Caco-2 (cell line): ENCODE measurements at regions of chr20 and their contacts with region 1.

Region 1: DNA sequence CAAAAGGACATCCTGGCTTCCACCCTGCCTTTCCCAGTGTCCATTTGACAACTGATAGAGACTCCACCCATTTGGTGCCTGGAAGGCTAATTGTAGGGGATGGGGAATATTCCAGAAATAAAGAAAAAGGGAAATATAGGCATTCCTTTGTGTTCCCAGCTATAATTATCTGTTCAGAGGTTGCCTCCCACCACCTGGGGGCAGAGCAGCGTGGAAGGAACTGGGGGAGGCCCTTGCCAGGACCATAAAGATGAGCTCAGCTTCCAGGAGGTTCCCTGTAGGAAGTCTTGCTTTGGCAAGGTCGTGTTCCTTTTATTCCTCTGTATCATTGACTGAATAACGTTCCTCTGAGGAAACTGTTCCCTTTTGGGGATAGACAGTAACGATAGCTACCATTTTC is 214.7 kb downstream of the TFAP2C start:
- DNase-seq: peak in 1 of 2 experiments; percentile 59
- H3K4me3 ChIP-seq: no peak overlapping the region
- H3K4me3 Mint-ChIP-seq: no peak overlapping the region
- H3K27ac Mint-ChIP-seq: no peak overlapping the region
- H3K4me1 ChIP-seq: no peaks in the 10 kb centered on the region
- H3K4me1 Mint-ChIP-seq: no peaks in the 10 kb centered on the region
- H3K27me3 ChIP-seq: no peaks in the 10 kb centered on the region; the same call in 1 of the 2 replicates
- H3K27me3 Mint-ChIP-seq: peaks cover 8% of the 10 kb centered on the region
- CTCF ChIP-seq: peak; percentile 39 to 61

Region 2: GRCh38 chr20:56859801-56860261 is 16.0 kb after region 1 on chr20:
- CTCF ChIA-PET with region 1: interaction called, 19 read pairs
- POLR2A ChIA-PET with region 1: no interaction called
- intact Hi-C with region 1: no loop called
- DNase-seq: peak in 1 of 2 experiments; percentile 70
- H3K4me3 ChIP-seq: no peak overlapping the region
- H3K4me3 Mint-ChIP-seq: no peak overlapping the region
- H3K27ac Mint-ChIP-seq: no peak overlapping the region
- H3K4me1 ChIP-seq: 0 out of 2 replicates have a peak, but pooled peaks cover 8% of the 10 kb centered on the region
- H3K4me1 Mint-ChIP-seq: no peaks in the 10 kb centered on the region
- H3K27me3 ChIP-seq: peaks cover 4% of the 10 kb centered on the region
- H3K27me3 Mint-ChIP-seq: peaks cover 21% of the 10 kb centered on the region
- CTCF ChIP-seq: no peak

Region 3: GRCh38 chr20:56945059-56945458 is 101.2 kb after region 1 on chr20:
- CTCF ChIA-PET with region 1: interaction called, 18 read pairs
- POLR2A ChIA-PET with region 1: no interaction called
- intact Hi-C with region 1: no loop called
- DNase-seq: no peak
- H3K4me3 ChIP-seq: no peak overlapping the region
- H3K4me3 Mint-ChIP-seq: no peak overlapping the region
- H3K27ac Mint-ChIP-seq: no peak overlapping the region
- H3K4me1 ChIP-seq: peaks cover 6% of the 10 kb centered on the region; the same call in 1 of the 2 replicates
- H3K4me1 Mint-ChIP-seq: peaks cover 9% of the 10 kb centered on the region
- H3K27me3 ChIP-seq: no peaks in the 10 kb centered on the region; the same call in none of the 2 replicates
- H3K27me3 Mint-ChIP-seq: peaks cover 8% of the 10 kb centered on the region
- CTCF ChIP-seq: peak; percentile 10 to 41

Region 4: DNA sequence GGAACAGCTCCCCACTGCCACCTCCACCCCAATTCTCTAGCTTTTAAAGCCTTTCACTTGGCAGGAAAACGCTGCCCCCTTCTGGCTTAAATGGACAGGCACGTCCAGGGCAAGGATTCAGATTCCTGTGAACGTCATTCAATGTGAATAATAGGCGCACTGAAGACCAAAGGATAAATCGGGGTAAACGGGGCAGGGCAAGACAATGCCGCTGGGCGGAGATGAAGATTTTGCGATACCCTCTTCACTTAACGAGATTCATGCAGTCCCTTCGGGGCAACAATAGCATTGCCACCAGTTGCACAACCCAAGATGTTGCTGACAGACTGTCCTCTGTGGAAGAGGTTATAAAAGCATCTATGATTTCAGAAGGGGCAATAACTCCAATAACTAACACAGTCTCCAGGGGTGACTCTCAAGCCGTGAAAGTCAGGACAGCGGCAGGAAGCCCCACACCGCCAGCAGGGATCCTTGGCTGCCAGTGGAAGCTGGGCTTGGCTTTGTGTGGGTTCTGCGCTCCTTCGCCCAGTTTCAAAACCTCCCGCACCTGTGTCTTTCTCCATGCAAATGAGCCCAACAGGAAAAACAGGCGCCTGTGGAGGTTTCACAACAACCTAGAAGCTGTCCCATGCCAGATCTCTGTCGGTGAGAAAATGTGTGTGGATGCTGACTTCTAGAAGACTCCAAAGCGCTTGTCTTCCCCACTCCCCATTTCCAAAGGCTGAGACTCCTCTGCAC is 130.9 kb after region 1 on chr20:
- CTCF ChIA-PET with region 1: interaction called, 31 read pairs
- POLR2A ChIA-PET with region 1: no interaction called
- intact Hi-C with region 1: loop called (anchors 5 kb)
- DNase-seq: peak; percentile 76 to 81
- H3K4me3 ChIP-seq: no peak overlapping the region
- H3K4me3 Mint-ChIP-seq: no peak overlapping the region
- H3K27ac Mint-ChIP-seq: no peak overlapping the region
- H3K4me1 ChIP-seq: no peaks in the 10 kb centered on the region
- H3K4me1 Mint-ChIP-seq: no peaks in the 10 kb centered on the region
- H3K27me3 ChIP-seq: peaks cover 1% of the 10 kb centered on the region; the same call in 1 of the 2 replicates
- H3K27me3 Mint-ChIP-seq: peaks cover 21% of the 10 kb centered on the region
- CTCF ChIP-seq: peak; percentile 95 to 96